Activated CD4-positive, alpha-beta T cell treated with anti-CD3 and anti-CD28 coated beads for 36 hours (primary cell): ENCODE measurements at regions of chr19 and their contacts with region 1.

Region 1: DNA sequence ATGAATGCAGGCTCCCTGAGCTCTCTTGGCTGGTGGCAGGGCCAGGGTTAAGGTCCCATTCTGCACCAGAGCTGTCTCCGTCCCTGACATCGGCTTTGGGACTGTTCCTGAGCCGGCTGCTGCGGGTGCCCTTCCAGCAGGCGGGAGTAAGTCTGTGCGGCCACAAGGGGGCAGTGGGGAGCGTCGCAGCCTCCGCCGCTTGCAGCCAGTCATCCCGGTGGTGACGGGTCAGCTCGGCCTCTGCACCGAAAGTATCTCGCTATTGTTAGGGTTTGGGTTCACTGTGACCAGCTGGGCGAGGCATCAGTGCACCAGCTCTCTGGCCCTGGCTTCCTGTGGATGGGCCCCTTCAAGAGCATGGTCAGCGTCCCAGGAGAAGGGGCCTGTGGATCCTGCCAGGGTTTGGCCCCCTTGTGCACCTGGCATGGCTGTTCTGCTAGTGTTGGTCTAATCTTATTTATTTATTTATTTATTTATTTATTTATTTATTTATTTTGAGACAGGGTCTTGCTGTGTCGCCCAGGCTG is 15.1 kb downstream of the NDUFB7 start:
- DNase-seq: peak; percentile 89
- ATAC-seq: peak; percentile 95
- H3K4me3 Mint-ChIP-seq: no peak overlapping the region
- H3K27ac Mint-ChIP-seq: no peak overlapping the region
- H3K4me1 Mint-ChIP-seq: peaks cover 46% of the 10 kb centered on the region
- H3K27me3 Mint-ChIP-seq: no peaks in the 10 kb centered on the region

Region 2: DNA sequence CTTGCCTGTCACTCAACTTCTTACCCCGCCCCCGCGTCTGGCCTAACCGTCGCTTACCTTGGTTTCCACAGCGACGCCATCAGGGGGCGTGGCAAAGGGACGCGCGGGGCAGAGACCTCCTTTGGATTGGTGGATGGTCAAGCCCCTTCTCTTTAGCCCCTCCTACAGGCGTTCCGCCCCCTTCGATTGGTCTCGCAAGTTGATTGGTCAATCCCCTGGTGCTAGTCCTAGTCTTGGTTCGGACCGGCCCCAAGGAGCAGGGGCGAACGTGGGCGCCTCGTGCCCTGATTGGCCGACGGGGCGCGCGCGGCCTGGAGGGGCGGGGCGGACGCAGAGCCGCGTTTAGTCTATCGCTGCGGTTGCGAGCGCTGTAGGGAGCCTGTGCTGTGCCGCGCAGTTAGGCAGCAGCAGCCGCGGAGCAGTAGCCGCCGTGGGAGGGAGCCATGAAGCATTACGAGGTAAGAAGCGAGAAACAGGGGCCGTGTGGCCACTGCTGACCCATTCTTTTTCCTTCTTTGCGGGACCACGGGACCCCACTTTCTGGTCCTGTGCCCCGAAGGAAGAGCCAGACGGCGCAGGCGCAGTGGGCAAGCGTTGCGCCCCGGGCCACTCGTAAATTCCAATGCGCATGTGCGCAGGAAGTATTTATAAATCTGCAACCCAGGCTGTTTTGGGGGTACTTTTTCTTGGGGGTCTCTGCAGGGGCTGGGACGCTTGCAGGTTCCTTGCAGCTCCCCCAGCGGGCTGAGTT is 27.3 kb before region 1 on chr19 and contains the start of gene TECR:
- CTCF ChIA-PET with region 1: interaction called, 6 read pairs
- POLR2A ChIA-PET with region 1: interaction called, 4 read pairs
- intact Hi-C with region 1: loop called in 1 of 2 experiments (anchors 1 kb)
- DNase-seq: peak; percentile 100
- ATAC-seq: peak; percentile 98
- H3K4me3 Mint-ChIP-seq: peak within 1 kb of the TSS; percentile 83
- H3K27ac Mint-ChIP-seq: peak within 1 kb of the TSS; percentile 90
- H3K4me1 Mint-ChIP-seq: peaks cover 37% of the 10 kb centered on the region
- H3K27me3 Mint-ChIP-seq: no peaks in the 10 kb centered on the region
- total RNA-seq, gene TECR: 106 to 145 TPM

Region 3: GRCh38 chr19:14536926-14537692 is 19.6 kb before region 1 on chr19:
- CTCF ChIA-PET with region 1: interaction called, 9 read pairs
- POLR2A ChIA-PET with region 1: interaction called, 4 read pairs
- intact Hi-C with region 1: loop called in 1 of 2 experiments (anchors 2 kb)
- DNase-seq: peak; percentile 83
- ATAC-seq: peak; percentile 89
- H3K4me3 Mint-ChIP-seq: no peak overlapping the region
- H3K27ac Mint-ChIP-seq: no peak overlapping the region
- H3K4me1 Mint-ChIP-seq: peaks cover 47% of the 10 kb centered on the region
- H3K27me3 Mint-ChIP-seq: no peaks in the 10 kb centered on the region

Region 4: DNA sequence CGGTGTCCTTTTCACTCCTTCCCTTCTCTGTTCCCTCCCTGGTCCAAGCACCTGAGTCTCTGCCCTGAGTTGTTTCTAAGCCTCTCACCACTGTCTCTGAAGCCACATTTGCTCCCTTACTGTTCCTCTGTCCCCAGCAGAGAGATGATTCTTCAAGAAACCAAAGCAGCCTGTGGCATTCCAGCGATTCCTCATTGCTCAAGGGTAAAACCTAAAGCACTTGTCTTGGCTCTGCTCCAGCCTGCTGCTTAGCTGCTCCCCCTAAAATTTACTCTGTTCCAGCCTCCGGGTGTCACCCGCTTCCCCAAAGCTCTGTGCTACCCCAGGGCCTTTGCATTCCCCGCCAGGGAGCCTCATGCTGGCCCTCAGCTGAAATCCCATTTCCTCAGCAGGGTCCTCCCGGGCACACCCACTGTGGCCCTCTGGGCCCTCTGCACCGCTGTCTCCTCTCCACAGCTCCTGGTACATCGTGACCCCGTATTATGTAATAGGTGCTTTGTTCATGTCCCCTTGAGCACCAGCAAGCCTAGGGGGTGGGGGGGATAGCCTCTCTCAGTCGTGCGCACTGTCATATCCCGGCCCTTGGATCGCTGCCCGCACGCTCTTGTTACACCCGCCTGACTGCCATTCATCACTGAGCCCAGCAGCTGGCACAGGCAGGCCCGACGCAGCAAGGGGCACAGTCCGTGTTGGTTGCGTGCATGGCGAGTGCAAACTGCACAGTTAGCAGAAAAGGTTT is 11.6 kb before region 1 on chr19:
- CTCF ChIA-PET with region 1: interaction called, 18 read pairs
- POLR2A ChIA-PET with region 1: no interaction called
- intact Hi-C with region 1: no loop called
- DNase-seq: no peak
- ATAC-seq: no peak
- H3K4me3 Mint-ChIP-seq: no peak overlapping the region
- H3K27ac Mint-ChIP-seq: no peak overlapping the region
- H3K4me1 Mint-ChIP-seq: peaks cover 30% of the 10 kb centered on the region
- H3K27me3 Mint-ChIP-seq: no peaks in the 10 kb centered on the region

Region 5: GRCh38 chr19:14571695-14572490 is 15.2 kb after region 1 on chr19 and contains the start of gene NDUFB7:
- CTCF ChIA-PET with region 1: interaction called, 13 read pairs
- POLR2A ChIA-PET with region 1: interaction called, 3 read pairs
- intact Hi-C with region 1: no loop called
- DNase-seq: peak; percentile 95
- ATAC-seq: peak; percentile 95
- H3K4me3 Mint-ChIP-seq: peak within 1 kb of the TSS; percentile 95
- H3K27ac Mint-ChIP-seq: peak within 1 kb of the TSS; percentile 92
- H3K4me1 Mint-ChIP-seq: peaks cover 36% of the 10 kb centered on the region
- H3K27me3 Mint-ChIP-seq: no peaks in the 10 kb centered on the region
- total RNA-seq, gene NDUFB7: 112 to 121 TPM